ENCODE measurements at regions of chr1 and their contacts with region 1.

Region 1: GRCh38 chr1:101357444-101357986 is 120.7 kb downstream of the S1PR1 start:
- DNase-seq: peak; percentile 26 to 90 (median 85)
- ATAC-seq: peak; percentile 100
- H3K4me3 ChIP-seq: no peak overlapping the region
- H3K4me3 Mint-ChIP-seq: peak overlapping the region in 3 of 10 donors; percentile 1 to 84 (median 60)
- H3K27ac ChIP-seq: no peak overlapping the region
- H3K27ac Mint-ChIP-seq: peak overlapping the region in 8 of 9 donors; percentile 42 to 97 (median 80)
- H3K4me1 ChIP-seq: peaks cover 6 to 7% of the 10 kb centered on the region in 2 donors
- H3K4me1 Mint-ChIP-seq: peaks cover 5 to 12% (median 9%) of the 10 kb centered on the region in 7 donors
- H3K27me3 ChIP-seq: no peaks in the 10 kb centered on the region
- H3K27me3 Mint-ChIP-seq: peaks cover 0 to 19% (median 0%) of the 10 kb centered on the region in 5 donors

Region 2: GRCh38 chr1:100921109-100921706 is 436.3 kb before region 1 on chr1:
- CTCF ChIA-PET with region 1: interaction called, 6 read pairs
- POLR2A ChIA-PET with region 1: no interaction called
- intact Hi-C with region 1: loop called (anchors 1 kb)
- DNase-seq: peak in 6 of 9 donors; percentile 35 to 62 (median 50)
- ATAC-seq: peak; percentile 77
- H3K4me3 ChIP-seq: no peak overlapping the region
- H3K4me3 Mint-ChIP-seq: peak overlapping the region in 1 of 10 donors; percentile 6
- H3K27ac ChIP-seq: peak overlapping the region; percentile 38
- H3K27ac Mint-ChIP-seq: peak overlapping the region in 8 of 9 donors; percentile 28 to 92 (median 88)
- H3K4me1 ChIP-seq: peaks cover 27 to 37% of the 10 kb centered on the region in 2 donors
- H3K4me1 Mint-ChIP-seq: peaks cover 13 to 62% (median 43%) of the 10 kb centered on the region in 7 donors
- H3K27me3 ChIP-seq: no peaks in the 10 kb centered on the region
- H3K27me3 Mint-ChIP-seq: no peaks in the 10 kb centered on the region

Region 3: GRCh38 chr1:101653482-101653946 is 296.0 kb after region 1 on chr1:
- CTCF ChIA-PET with region 1: no interaction called
- POLR2A ChIA-PET with region 1: no interaction called
- intact Hi-C with region 1: no loop called
- DNase-seq: no peak
- ATAC-seq: no peak
- H3K4me3 ChIP-seq: no peak overlapping the region
- H3K4me3 Mint-ChIP-seq: peak overlapping the region in 1 of 10 donors; percentile 2
- H3K27ac ChIP-seq: no peak overlapping the region
- H3K27ac Mint-ChIP-seq: no peak overlapping the region
- H3K4me1 ChIP-seq: no peaks in the 10 kb centered on the region
- H3K4me1 Mint-ChIP-seq: no peaks in the 10 kb centered on the region
- H3K27me3 ChIP-seq: no peaks in the 10 kb centered on the region
- H3K27me3 Mint-ChIP-seq: peaks cover 0 to 27% (median 19%) of the 10 kb centered on the region in 5 donors

Measured in naive thymus-derived CD4-positive, alpha-beta T cell (primary cell).